ENCODE measurements at regions of chr13 and their contacts with region 1.

Region 1: DNA sequence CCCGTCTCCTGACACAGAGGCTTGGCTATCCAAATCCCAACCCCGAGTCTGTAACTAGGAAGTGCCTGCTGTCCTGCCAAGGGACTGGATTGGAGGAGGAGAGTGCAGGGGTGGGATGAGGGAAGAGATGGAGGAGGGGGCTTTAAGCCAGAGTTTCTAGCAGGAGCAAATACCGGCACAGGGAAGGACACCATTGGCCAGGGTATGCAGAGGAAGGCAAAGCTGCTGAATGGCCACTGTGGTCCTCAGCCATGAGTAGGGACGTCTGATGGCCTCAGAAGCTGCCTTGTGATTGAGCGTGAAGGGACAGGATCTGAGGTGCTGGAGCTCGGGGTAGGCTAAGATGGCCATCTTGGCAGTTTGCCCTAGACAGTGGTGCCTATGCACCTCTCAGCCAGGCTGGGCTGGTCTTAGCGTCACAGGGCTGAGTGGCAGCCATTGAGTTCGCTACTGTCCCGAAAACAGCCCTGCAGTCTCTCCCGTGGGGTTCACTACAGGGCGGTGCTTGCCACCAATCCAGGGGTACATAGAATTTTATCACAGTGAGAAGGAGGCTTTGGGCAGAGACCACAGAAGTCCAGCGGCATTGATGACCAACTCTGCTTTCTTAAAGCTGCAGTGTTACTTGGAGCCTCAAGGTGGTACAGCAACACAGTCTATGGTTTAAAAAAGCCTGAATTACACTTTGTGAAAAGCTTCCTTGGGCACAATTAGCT is 61.8 kb downstream of the AKAP11 start:
- DNase-seq: peak in 1 of 2 experiments; percentile 2
- H3K4me3 ChIP-seq: no peak overlapping the region
- H3K27ac ChIP-seq: no peak overlapping the region
- H3K4me1 ChIP-seq: peaks cover 19% of the 10 kb centered on the region
- H3K27me3 ChIP-seq: no peaks in the 10 kb centered on the region
- CTCF ChIP-seq: peak; percentile 56

Region 2: GRCh38 chr13:42594970-42595571 is 261.3 kb after region 1 on chr13:
- CTCF ChIA-PET with region 1: no interaction called
- POLR2A ChIA-PET with region 1: no interaction called
- intact Hi-C with region 1: loop called (anchors 10 kb)
- DNase-seq: peak in 1 of 2 experiments; percentile 33
- H3K4me3 ChIP-seq: no peak overlapping the region
- H3K27ac ChIP-seq: no peak overlapping the region
- H3K4me1 ChIP-seq: peaks cover 10% of the 10 kb centered on the region
- H3K27me3 ChIP-seq: no peaks in the 10 kb centered on the region
- CTCF ChIP-seq: peak; percentile 83

Measured in PC-9 (cell line).